ENCODE measurements at regions of chr11 and their contacts with region 1.

Region 1: DNA sequence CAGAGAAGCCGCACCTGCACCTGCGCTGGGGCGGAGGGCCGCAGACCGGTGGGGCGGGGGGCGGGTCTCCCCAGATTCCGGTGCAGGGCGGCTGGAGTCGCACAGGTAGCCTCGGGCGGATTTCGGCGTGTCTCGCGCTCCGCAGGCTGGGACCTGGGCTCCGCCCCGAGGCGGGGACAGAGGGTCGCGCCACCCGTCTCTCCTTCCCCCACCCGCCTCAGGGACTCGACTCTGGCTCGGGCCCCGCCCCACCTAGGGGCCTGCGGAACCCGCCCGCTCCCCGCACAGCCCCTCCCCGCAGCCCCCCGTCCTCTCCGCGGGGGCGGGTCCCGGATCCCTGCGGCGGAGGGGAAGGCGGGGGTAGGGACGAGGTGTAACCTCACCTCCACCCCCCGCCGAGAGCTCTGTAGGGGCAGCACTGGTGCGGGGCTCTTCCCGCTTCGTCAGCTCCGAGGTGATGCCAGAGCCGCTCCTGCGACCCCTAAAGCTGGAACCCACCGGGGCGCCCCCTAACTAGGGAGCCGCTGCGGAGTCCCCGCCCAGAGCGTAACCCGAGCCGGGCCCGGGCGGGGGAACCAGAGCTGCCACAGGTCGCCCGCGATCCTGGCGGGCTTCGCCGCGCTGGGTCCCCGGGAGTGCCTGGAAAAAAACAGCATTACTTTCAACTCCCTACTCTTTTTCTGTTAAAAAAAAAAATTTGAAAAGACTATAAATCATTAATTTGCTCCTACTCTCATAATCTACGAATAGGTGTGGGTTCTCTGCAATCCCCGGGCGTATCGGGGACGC is at the start of gene SLC29A2:
- DNase-seq: peak; percentile 52 to 81 (median 70)
- ATAC-seq: peak; percentile 80 to 84 (median 82)
- H3K4me3 ChIP-seq: peak within 1 kb of the TSS; percentile 75 to 83
- H3K4me3 Mint-ChIP-seq: peak within 1 kb of the TSS; percentile 81 to 89 (median 86)
- H3K27ac ChIP-seq: peak within 1 kb of the TSS; percentile 75
- H3K27ac Mint-ChIP-seq: peak within 1 kb of the TSS; percentile 90 to 91
- H3K4me1 ChIP-seq: peaks cover 6 to 15% of the 10 kb centered on the region in 2 experiments
- H3K4me1 Mint-ChIP-seq: peaks cover 0 to 17% (median 13%) of the 10 kb centered on the region in 3 donors
- H3K27me3 ChIP-seq: no peaks in the 10 kb centered on the region
- H3K27me3 Mint-ChIP-seq: no peaks in the 10 kb centered on the region
- total RNA-seq, gene SLC29A2: 8.5 to 14.7 (median 14.4) TPM

Region 2: GRCh38 chr11:65095974-65096806 is 1275.6 kb before region 1 on chr11 and contains the start of gene VPS51:
- CTCF ChIA-PET with region 1: no interaction called
- POLR2A ChIA-PET with region 1: interaction called in 1 of 2 experiments, 11 read pairs
- DNase-seq: peak; percentile 72 to 93 (median 82)
- ATAC-seq: peak; percentile 86 to 88 (median 86)
- H3K4me3 ChIP-seq: peak within 1 kb of the TSS; percentile 39 to 78
- H3K4me3 Mint-ChIP-seq: peak within 1 kb of the TSS; percentile 81 to 93 (median 85)
- H3K27ac ChIP-seq: peak within 1 kb of the TSS; percentile 83
- H3K27ac Mint-ChIP-seq: peak within 1 kb of the TSS; percentile 92 to 94
- H3K4me1 ChIP-seq: peaks cover 7 to 22% of the 10 kb centered on the region in 2 experiments
- H3K4me1 Mint-ChIP-seq: peaks cover 13 to 24% (median 23%) of the 10 kb centered on the region in 3 donors
- H3K27me3 ChIP-seq: no peaks in the 10 kb centered on the region
- H3K27me3 Mint-ChIP-seq: no peaks in the 10 kb centered on the region
- total RNA-seq, gene VPS51: 210 to 303 (median 263) TPM

Region 3: DNA sequence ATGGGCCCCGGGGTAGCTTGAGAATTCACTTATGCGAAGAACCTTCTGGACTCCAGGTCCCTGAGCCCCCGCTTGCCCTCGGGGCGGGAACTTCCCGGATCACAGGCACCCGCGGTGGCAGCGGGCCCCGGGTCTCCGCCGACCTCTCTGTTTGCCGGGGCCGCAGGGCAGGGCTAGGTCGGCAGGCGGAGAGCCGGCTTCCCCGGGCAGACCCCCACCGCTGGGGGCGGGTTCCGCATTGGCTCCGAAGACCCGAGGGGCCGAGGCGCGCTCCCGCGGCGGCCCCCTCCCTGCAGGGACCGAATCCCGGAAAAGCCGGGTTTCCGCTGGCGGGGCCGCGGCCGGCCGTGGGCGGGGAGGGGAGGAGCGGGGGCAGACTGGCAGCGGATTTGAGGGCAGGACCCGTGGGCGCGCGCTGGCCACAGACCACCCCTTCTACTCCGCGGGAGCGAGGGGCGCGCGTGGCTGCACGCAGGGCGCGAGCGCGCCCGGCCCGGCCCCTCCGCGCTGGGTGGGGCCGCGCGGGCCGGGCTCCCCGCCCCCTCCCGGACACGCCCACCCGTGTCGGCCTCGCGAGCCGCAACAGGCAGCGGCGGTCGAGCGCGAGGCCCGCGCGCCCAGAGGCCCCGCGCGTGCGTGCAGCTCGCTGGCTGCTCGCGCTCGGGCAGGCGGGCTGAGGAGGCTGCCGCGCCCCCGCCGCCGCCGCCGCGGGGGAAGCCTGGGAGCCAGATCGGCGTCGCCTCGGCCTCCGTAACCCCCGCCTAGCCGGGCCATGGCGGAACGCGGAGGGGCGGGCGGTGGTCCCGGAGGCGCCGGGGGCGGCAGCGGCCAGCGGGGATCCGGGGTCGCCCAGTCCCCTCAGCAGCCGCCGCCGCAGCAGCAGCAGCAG is 301.9 kb before region 1 on chr11 and contains the start of gene PACS1:
- CTCF ChIA-PET with region 1: no interaction called
- POLR2A ChIA-PET with region 1: no interaction called
- DNase-seq: peak; percentile 47 to 90 (median 67)
- ATAC-seq: peak; percentile 71 to 78 (median 74)
- H3K4me3 ChIP-seq: peak within 1 kb of the TSS; percentile 81 to 91
- H3K4me3 Mint-ChIP-seq: peak within 1 kb of the TSS; percentile 93 to 98 (median 97)
- H3K27ac ChIP-seq: peak within 1 kb of the TSS; percentile 81
- H3K27ac Mint-ChIP-seq: peak within 1 kb of the TSS; percentile 97
- H3K4me1 ChIP-seq: peaks cover 24 to 42% of the 10 kb centered on the region in 2 experiments
- H3K4me1 Mint-ChIP-seq: peaks cover 59 to 75% (median 74%) of the 10 kb centered on the region in 3 donors
- H3K27me3 ChIP-seq: no peaks in the 10 kb centered on the region
- H3K27me3 Mint-ChIP-seq: no peaks in the 10 kb centered on the region
- total RNA-seq, gene PACS1: 222 to 268 (median 236) TPM

Region 4: DNA sequence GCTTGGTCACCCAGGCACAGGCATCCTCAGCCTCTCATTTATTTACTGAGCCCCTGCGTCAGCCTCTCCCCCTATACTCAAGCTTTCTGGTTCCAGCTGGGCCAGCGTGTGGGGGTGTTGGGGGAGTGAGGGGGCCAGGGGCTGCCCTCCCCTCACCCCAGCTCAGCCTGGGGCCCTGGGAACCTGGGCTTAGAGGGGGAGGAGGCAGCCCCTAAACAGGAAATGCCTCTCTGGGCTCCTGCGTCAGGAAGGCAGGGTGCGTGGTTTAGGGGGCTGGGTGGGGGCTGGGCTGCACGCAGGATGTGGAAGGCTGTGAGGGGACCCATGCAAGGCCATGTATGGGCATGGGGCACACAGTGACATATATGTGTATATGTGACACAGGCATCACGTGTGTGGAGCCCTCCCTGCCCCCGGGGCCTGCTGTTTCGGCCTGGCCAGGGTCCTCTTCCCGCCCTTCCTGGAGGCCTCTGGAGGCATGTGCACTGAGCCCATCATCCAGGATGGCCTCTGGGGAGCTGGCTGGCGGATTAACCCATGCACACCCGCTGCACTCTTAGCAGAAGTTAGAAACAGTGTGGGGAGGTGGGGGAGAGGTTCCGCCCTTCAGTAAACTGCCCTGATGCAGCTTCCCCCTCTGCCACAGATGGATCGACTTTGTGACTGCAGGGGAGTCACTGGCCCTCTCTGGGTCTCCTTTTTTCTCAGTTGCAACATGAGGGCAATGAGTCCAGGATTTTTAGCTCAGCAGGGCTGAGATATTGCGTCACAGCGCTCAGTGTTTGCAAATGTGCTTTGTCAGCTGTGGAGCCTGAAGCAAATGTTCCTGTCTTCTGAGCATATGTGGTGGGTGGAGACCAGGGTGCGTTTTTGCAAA is 53.9 kb before region 1 on chr11:
- CTCF ChIA-PET with region 1: interaction called in 1 of 2 experiments, 9 read pairs
- POLR2A ChIA-PET with region 1: interaction called, 7 to 11 read pairs
- DNase-seq: peak; percentile 52 to 97 (median 90)
- ATAC-seq: peak; percentile 80 to 88 (median 81)
- H3K4me3 ChIP-seq: peak overlapping the region; percentile 26 to 44
- H3K4me3 Mint-ChIP-seq: peak overlapping the region; percentile 67 to 80 (median 68)
- H3K27ac ChIP-seq: peak overlapping the region; percentile 94
- H3K27ac Mint-ChIP-seq: peak overlapping the region; percentile 93 to 97
- H3K4me1 ChIP-seq: peaks cover 32 to 78% of the 10 kb centered on the region in 2 experiments
- H3K4me1 Mint-ChIP-seq: peaks cover 64 to 73% (median 64%) of the 10 kb centered on the region in 3 donors
- H3K27me3 ChIP-seq: peaks cover 0 to 14% of the 10 kb centered on the region in 2 experiments
- H3K27me3 Mint-ChIP-seq: peaks cover 0 to 2% of the 10 kb centered on the region in 2 donors

Region 5: GRCh38 chr11:66386171-66387069 is 14.6 kb after region 1 on chr11:
- CTCF ChIA-PET with region 1: interaction called in 1 of 2 experiments, 11 read pairs
- POLR2A ChIA-PET with region 1: interaction called in 1 of 2 experiments, 3 read pairs
- DNase-seq: peak; percentile 51 to 89 (median 77)
- ATAC-seq: peak; percentile 68 to 78 (median 71)
- H3K4me3 ChIP-seq: peak overlapping the region in 1 of 2 donors; percentile 4
- H3K4me3 Mint-ChIP-seq: peak overlapping the region in 2 of 3 donors; percentile 3 to 17
- H3K27ac ChIP-seq: no peak overlapping the region
- H3K27ac Mint-ChIP-seq: no peak overlapping the region
- H3K4me1 ChIP-seq: peaks cover 0 to 12% of the 10 kb centered on the region in 2 experiments
- H3K4me1 Mint-ChIP-seq: peaks cover 6 to 8% (median 6%) of the 10 kb centered on the region in 3 donors
- H3K27me3 ChIP-seq: peaks cover 2 to 29% of the 10 kb centered on the region in 2 experiments
- H3K27me3 Mint-ChIP-seq: peaks cover 0 to 2% of the 10 kb centered on the region in 2 donors

Region 6: GRCh38 chr11:66480117-66480938 is 108.5 kb after region 1 on chr11 and contains the start of gene DPP3:
- CTCF ChIA-PET with region 1: no interaction called
- POLR2A ChIA-PET with region 1: no interaction called
- DNase-seq: peak; percentile 86 to 98 (median 95)
- ATAC-seq: peak; percentile 98 to 99 (median 98)
- H3K4me3 ChIP-seq: peak within 1 kb of the TSS; percentile 72 to 89
- H3K4me3 Mint-ChIP-seq: peak within 1 kb of the TSS; percentile 85 to 91 (median 87)
- H3K27ac ChIP-seq: peak within 1 kb of the TSS; percentile 58
- H3K27ac Mint-ChIP-seq: peak within 1 kb of the TSS; percentile 78 to 92
- H3K4me1 ChIP-seq: peaks cover 3 to 23% of the 10 kb centered on the region in 2 experiments
- H3K4me1 Mint-ChIP-seq: peaks cover 22 to 28% (median 25%) of the 10 kb centered on the region in 3 donors
- H3K27me3 ChIP-seq: no peaks in the 10 kb centered on the region
- H3K27me3 Mint-ChIP-seq: no peaks in the 10 kb centered on the region
- total RNA-seq, gene DPP3: 20.7 to 34.6 (median 29.5) TPM

Region 7: GRCh38 chr11:66920978-66921784 is 549.4 kb after region 1 on chr11:
- CTCF ChIA-PET with region 1: no interaction called
- POLR2A ChIA-PET with region 1: no interaction called
- DNase-seq: no peak
- ATAC-seq: no peak
- H3K4me3 ChIP-seq: no peak overlapping the region
- H3K4me3 Mint-ChIP-seq: no peak overlapping the region
- H3K27ac ChIP-seq: no peak overlapping the region
- H3K27ac Mint-ChIP-seq: no peak overlapping the region
- H3K4me1 ChIP-seq: no peaks in the 10 kb centered on the region
- H3K4me1 Mint-ChIP-seq: no peaks in the 10 kb centered on the region
- H3K27me3 ChIP-seq: peaks cover 0 to 2% of the 10 kb centered on the region in 2 experiments
- H3K27me3 Mint-ChIP-seq: no peaks in the 10 kb centered on the region